ENCODE measurements at regions of chr4 and their contacts with region 1.

Region 1: DNA sequence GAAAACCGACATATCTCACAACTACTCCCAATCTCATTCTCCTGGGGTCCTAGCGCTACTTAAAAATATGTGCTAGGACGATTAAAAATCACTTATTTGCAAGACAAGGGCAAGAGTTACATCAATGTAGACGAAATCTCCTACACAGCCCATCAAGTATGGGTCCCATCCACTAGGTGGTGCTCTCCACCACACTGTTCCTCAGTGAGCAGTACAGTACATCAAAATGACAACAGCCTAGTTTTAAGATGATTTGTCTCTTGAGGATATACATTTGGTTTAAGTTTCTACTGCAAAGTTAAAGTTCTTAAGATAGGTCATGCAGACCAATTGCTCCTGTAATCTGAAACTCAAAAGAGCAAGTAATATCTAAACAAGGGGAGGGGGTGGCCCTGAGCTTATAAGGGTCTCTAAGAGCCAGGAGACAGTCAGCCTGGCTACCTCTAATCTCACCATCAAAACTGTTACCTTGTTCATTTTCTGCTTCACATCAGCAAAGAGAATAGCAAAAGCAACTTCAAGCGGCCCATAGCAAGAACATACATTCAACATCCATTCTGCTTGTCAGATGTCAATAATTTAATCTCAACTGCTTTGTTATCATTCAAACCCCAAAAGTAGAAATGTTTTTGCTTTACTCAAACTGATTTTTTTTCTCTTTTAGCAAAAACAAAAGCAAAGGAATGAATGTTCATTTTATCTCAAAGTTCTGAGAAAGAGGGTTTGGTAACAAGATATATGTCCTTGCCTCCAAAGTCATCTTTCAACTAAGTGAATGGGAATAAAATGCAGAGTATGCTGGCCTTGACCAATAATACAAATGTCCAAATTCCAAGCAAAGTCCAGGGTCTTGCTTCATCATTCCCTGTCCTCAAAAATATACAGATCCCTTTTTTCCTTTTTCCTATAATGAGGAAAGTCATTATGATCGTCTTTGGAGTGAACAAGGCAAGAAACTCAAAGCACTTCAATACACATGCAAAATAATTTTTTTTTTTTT is 53.1 kb downstream of the STX18 start:
- DNase-seq: peak; percentile 64
- ATAC-seq: peak; percentile 93
- H3K4me3 ChIP-seq: no peak overlapping the region
- H3K27ac ChIP-seq: peak overlapping the region; percentile 18
- H3K4me1 ChIP-seq: peaks cover 82% of the 10 kb centered on the region
- H3K27me3 ChIP-seq: no peaks in the 10 kb centered on the region
- CTCF ChIP-seq: peak; percentile 92
- EP300 ChIP-seq: peak in 1 of 2 experiments; percentile 60; a peak in 2 of 4 replicates
- POLR2A ChIP-seq: no peak
- RAD21 ChIP-seq: peak; percentile 63

Region 2: DNA sequence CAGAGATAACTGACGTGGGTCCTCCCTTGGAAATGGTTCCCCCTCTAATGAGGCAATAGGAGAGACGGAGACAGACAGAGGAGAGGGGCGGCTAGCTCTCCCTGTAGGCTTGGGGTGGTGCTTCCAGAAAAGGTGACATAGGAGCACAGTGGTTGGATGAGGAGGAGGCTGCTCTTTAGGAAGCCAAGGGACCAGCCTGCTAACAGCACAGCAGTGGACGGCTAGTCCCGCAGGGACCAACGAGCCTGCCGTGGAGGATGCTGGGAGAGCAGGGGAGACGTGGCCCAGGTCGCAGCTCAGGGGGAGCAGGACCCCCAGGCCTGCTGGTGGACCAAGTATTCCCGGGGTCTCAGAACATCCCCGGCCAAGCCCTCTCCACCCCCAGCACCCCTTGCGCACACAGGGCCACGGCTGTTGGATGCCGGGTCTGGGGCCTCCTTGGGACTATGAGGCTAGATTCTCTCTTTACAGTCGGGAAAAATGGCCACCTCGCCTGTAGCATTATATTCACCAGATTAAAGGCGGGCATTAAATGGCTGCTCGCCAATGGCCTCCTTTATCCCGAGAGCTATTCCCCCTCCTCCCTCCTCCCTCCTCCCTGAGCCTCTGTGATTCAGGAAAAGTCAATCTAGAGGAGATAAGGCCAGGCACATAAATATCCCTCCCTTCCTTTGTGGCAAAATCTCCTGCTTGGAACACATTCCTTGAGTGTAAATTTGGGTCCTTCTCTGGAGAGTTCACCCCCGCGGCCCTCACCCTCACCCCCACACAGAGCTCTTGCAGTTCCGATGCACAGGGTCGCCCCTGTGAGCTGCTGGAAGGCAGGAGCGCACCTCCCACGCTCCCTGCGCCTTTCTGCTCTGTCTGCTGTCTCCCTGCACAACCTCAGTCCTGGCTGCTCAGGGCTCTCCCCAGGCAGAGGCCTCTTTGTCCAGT is 132.3 kb before region 1 on chr4:
- CTCF ChIA-PET with region 1: no interaction called
- POLR2A ChIA-PET with region 1: no interaction called
- in situ Hi-C with region 1: no loop called
- intact Hi-C with region 1: no loop called
- DNase-seq: no peak
- ATAC-seq: no peak
- H3K4me3 ChIP-seq: no peak overlapping the region
- H3K27ac ChIP-seq: no peak overlapping the region
- H3K4me1 ChIP-seq: no peaks in the 10 kb centered on the region
- H3K27me3 ChIP-seq: peaks cover 3 to 38% of the 10 kb centered on the region in 2 experiments; a peak in 3 of 5 replicates
- CTCF ChIP-seq: no peak
- EP300 ChIP-seq: no peak
- POLR2A ChIP-seq: no peak
- RAD21 ChIP-seq: no peak

Region 3: DNA sequence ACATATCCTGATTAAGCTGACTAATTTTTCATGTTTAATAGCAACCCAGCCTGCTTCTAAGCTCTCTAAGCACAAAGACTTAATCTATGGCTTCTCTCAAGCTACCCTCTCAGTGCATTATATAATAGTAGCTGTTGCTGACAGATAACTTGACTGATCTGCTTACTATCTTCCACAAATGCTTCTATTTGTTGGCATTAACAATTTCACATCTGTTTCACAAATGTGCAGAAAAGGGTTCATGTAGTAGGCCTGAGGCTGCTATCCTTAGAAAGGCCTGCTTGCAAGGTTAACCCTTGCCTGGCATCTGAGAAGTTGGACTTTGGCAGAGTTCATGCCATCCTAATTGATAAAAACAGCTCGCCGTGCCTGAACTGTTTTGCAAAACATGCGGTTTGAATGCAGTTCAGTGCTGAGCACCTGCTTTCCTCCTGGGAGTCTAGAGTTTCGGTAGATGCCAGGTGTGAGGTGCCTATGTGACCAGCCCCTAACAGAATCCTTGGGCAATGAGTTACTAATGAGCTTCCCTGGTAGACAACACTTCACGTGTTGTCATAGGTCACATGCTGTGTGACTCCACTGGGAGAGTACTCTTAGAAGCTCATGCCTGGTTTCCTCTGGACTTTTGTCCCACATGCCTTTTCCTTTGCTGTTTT is 33.4 kb before region 1 on chr4:
- CTCF ChIA-PET with region 1: no interaction called
- POLR2A ChIA-PET with region 1: no interaction called
- in situ Hi-C with region 1: no loop called
- intact Hi-C with region 1: no loop called
- DNase-seq: no peak
- ATAC-seq: no peak
- H3K4me3 ChIP-seq: no peak overlapping the region
- H3K27ac ChIP-seq: no peak overlapping the region
- H3K4me1 ChIP-seq: no peaks in the 10 kb centered on the region
- H3K27me3 ChIP-seq: no peaks in the 10 kb centered on the region
- CTCF ChIP-seq: no peak
- EP300 ChIP-seq: no peak
- POLR2A ChIP-seq: no peak
- RAD21 ChIP-seq: no peak

Region 4: DNA sequence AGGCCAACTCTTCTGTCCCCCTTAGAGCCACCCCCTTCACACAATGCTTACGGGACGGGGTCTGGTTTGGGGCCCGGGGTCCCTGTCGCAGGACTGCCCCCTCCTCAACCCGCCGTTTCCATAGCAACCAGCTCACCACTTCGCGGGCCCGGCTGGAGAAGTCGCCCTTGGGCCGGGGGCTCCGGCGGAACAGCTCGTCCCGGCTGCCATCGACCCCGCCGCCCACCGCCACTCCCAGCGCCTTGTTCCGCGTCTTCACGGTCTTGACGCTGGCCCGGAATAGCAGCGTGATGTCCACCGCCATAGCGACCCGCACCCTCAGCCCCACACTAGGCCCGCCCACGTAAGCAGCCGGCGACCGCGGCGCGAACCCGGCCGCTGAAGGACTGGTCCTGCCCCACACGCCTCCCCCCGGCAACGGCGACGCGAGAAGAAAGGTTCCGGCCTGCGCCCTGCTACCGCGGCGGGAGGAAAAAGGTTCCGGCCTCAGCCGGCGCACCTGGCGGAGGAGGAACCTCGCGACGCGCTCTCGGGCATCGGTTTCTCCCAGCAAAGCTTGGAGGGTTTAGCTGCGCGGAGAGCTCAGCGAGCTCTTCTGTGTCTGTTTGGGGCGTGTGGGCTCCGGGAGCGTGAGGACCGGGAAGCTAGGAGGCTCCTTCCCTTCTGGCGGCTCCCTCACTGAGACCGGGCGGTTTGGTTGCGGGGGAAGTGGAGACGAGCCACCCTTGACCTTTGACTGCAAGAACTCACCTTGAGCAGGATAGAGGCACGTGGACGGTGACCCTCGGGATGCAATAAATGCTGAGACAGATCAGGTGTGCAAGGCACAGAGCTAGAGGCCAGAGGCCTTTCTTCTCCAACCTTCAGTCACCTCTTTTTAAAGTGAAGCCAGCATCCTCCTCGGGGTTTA is 53.2 kb after region 1 on chr4 and contains the start of gene STX18:
- CTCF ChIA-PET with region 1: no interaction called
- POLR2A ChIA-PET with region 1: interaction called, 5 read pairs
- in situ Hi-C with region 1: no loop called
- intact Hi-C with region 1: loop called (anchors 5 kb)
- DNase-seq: peak; percentile 73
- ATAC-seq: peak; percentile 96
- H3K4me3 ChIP-seq: peak within 1 kb of the TSS; percentile 86 to 94 (median 86)
- H3K27ac ChIP-seq: peak within 1 kb of the TSS; percentile 91
- H3K4me1 ChIP-seq: peaks cover 54% of the 10 kb centered on the region
- H3K27me3 ChIP-seq: no peaks in the 10 kb centered on the region
- CTCF ChIP-seq: peak; percentile 38; the same call in 1 of the 2 replicates
- EP300 ChIP-seq: peak; percentile 58 to 79; a peak in 3 of 4 replicates
- POLR2A ChIP-seq: peak; percentile 70 to 81
- RAD21 ChIP-seq: peak; percentile 74
- total RNA-seq, gene STX18: 37.1 and 41.2 TPM in 2 replicates

Region 5: DNA sequence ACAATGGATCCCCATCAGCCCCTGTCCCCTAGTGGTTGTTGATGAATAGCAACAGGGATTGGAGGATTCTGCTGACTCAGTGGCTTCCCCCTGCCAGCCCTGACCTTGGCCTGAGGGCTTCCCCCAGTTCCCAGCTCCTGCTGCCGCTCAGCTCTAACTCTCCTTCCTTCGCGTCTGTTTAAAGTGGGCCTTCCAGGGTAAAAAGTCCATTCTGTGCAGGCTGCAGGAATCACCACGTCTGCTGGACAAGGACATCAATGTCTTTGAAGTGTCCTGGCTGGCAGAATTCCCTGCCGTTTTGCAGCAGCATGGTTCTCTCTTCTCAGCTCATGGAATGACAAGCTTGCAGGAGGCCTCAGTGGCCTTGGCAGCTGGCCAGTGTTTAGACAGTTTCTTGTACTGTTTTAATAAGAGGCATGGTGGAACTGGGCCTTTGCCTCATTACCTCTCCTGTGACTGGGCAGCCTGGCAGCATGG is 205.6 kb after region 1 on chr4:
- CTCF ChIA-PET with region 1: no interaction called
- POLR2A ChIA-PET with region 1: no interaction called
- in situ Hi-C with region 1: no loop called
- intact Hi-C with region 1: loop called (anchors 5 kb)
- DNase-seq: peak; percentile 92
- ATAC-seq: peak; percentile 89
- H3K4me3 ChIP-seq: peak overlapping the region in 1 of 3 experiments; percentile 31; a peak in 2 of 6 replicates
- H3K27ac ChIP-seq: peak overlapping the region; percentile 76
- H3K4me1 ChIP-seq: peaks cover 64% of the 10 kb centered on the region
- H3K27me3 ChIP-seq: no peaks in the 10 kb centered on the region
- CTCF ChIP-seq: peak; percentile 73
- EP300 ChIP-seq: peak in 1 of 2 experiments; percentile 75; a peak in 2 of 4 replicates
- POLR2A ChIP-seq: no peak
- RAD21 ChIP-seq: peak; percentile 35; the same call in 1 of the 2 replicates

Region 6: DNA sequence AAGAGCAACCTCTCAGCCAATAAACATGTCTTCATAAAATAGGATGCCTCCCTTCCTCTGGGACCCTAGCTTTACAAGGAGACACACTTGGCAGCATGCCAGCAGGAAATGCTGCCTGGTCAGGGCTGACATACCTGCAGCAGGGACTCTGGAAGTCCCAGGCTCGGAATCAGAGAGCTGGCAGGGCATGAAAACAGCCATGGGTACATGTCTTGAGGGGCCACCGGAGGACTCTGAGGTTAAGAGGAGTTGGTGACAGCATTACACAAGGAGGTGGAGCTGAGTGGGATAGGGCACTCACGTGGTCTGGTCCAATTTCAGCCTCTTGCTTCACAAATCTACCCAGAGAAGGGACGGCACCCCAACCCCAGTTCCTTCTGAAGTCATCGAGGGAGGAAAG is 386.4 kb after region 1 on chr4:
- CTCF ChIA-PET with region 1: interaction called, 13 read pairs
- POLR2A ChIA-PET with region 1: interaction called, 3 read pairs
- in situ Hi-C with region 1: loop called (anchors 5 kb)
- intact Hi-C with region 1: loop called (anchors 1 kb)
- DNase-seq: no peak
- ATAC-seq: no peak
- H3K4me3 ChIP-seq: no peak overlapping the region
- H3K27ac ChIP-seq: no peak overlapping the region
- H3K4me1 ChIP-seq: peaks cover 11% of the 10 kb centered on the region
- H3K27me3 ChIP-seq: peaks cover 0 to 39% of the 10 kb centered on the region in 2 experiments; a peak in 4 of 5 replicates
- CTCF ChIP-seq: no peak
- EP300 ChIP-seq: no peak
- POLR2A ChIP-seq: no peak
- RAD21 ChIP-seq: no peak

Measured in HepG2 (cell line).